ENCODE measurements at regions of chr14 and their contacts with region 1.

Region 1: DNA sequence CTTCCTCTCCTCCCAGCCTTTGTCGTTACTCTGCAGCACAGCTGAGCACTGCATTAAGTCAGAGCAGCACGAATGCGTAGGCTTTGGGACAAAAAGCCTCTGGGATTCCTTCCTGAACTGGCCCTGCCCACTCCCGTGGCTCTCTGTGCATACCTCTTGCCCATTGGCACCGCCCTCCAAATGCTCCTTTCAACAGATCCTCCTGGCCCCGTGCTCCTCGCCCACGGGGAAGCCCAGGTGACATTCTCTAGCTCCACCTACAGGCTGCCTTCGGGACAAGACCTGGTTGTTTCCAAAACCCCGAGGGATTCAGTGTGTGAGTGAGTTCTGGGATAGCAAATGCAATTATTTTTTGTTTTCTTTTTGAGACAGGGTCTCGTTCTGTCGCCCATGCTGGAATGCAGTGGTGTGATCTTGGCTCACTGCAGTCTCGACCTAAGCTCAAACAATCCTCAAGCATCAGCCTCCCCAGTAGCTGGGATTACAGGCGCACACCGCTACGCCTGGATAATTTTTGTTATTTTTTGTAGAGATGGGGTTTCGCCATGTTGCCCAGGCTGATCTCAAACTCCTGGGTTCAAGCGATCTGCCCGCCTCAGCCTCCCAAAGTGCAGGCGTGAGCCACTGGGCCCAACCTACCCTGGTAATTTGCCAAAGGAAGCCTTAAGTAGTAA is 17.9 kb upstream of the TDRD9 start:
- DNase-seq: peak; percentile 80 to 88 (median 81)
- ATAC-seq: peak; percentile 91 to 97 (median 96)
- H3K4me3 ChIP-seq: peak overlapping the region in 8 of 12 donors; percentile 0 to 43 (median 26)
- H3K27ac ChIP-seq: peak overlapping the region in 8 of 12 donors; percentile 14 to 56 (median 34)
- H3K4me1 ChIP-seq: peaks cover 0 to 13% (median 10%) of the 10 kb centered on the region in 12 donors
- H3K27me3 ChIP-seq: no peaks in the 10 kb centered on the region
- CTCF ChIP-seq: peak; percentile 62 to 91 (median 84)
- POLR2A ChIP-seq: no peak

Region 2: DNA sequence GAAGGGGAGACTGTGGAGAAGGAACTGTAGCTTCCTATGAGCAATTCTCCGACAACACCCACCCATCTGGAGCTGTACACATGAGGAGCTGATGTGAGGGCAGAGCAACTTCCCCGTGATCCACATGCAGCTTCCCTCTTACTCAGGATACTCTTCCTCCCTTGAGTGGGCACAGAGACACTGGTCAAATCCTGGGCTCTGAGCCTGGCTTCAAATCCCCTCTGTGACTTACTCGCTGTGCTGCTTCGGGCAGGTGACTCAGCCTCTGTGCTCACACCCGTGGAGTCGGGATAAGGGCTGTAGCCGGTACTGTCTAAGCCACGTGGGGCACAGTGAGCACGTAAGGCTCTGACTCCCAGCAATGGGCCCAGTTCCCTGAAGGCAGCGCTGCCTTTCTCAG is 163.7 kb before region 1 on chr14:
- intact Hi-C with region 1: loop called in 1 of 10 experiments (anchors 10 kb)
- DNase-seq: no peak
- ATAC-seq: peak in 2 of 4 donors; percentile 17 to 29
- H3K4me3 ChIP-seq: no peak overlapping the region
- H3K27ac ChIP-seq: no peak overlapping the region
- H3K4me1 ChIP-seq: peaks cover 0 to 5% (median 0%) of the 10 kb centered on the region in 12 donors
- H3K27me3 ChIP-seq: no peaks in the 10 kb centered on the region
- CTCF ChIP-seq: no peak
- POLR2A ChIP-seq: no peak

Region 3: DNA sequence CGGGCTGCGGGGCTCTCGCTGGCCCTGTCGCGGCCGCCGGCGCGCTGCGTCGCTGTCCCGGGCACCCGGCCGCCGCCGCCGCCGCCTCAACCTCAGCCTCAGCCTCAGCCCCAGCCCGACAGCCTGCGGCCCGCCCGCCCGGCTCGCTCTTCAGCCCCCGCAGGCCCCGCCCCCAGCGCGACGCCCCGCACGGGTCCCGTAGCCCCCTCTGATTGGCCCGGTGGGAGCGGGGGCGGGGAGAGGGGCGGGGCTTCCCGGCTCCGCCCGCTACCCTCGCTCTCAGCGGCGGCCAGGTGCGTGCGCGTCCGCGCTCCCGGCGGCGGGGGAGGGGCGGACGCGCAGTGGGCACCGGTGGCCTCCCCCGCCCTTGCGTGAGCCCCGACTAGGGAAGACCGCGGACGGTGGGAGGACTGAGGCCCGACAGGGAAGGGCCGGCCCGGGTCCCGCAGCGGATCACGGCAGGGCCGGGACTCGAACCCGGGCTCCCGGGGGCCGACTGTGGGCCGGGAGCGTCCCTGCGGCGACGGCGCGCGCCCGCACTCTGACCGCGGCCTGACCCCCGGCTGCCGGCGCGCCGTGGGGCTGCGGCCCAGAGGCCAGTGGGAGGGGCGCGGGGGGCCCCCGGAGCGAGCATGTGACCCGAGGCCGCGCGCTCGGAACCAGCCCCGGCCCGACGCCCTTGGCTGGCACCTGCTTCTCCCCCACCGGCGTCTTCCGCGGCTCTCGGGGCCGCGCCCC is 62.8 kb before region 1 on chr14 and contains the start of gene PPP1R13B:
- intact Hi-C with region 1: loop called in 1 of 10 experiments (anchors 10 kb)
- DNase-seq: peak; percentile 95 to 96 (median 95)
- ATAC-seq: peak; percentile 93 to 96 (median 96)
- H3K4me3 ChIP-seq: peak within 1 kb of the TSS; percentile 50 to 98 (median 82)
- H3K27ac ChIP-seq: peak within 1 kb of the TSS; percentile 79 to 96 (median 90)
- H3K4me1 ChIP-seq: peaks cover 0 to 44% (median 25%) of the 10 kb centered on the region in 12 donors
- H3K27me3 ChIP-seq: peaks cover 0 to 9% (median 0%) of the 10 kb centered on the region in 9 donors
- CTCF ChIP-seq: no peak
- POLR2A ChIP-seq: peak in 1 of 2 donors; percentile 67
- total RNA-seq, gene PPP1R13B: 59.0 to 96.2 (median 78.1) TPM

Region 4: GRCh38 chr14:103989964-103990363 is 79.6 kb after region 1 on chr14:
- intact Hi-C with region 1: loop called in 1 of 10 experiments (anchors 10 kb)
- DNase-seq: no peak
- ATAC-seq: no peak
- H3K4me3 ChIP-seq: no peak overlapping the region
- H3K27ac ChIP-seq: no peak overlapping the region
- H3K4me1 ChIP-seq: no peaks in the 10 kb centered on the region
- H3K27me3 ChIP-seq: peaks cover 0 to 9% (median 0%) of the 10 kb centered on the region in 9 donors
- CTCF ChIP-seq: no peak
- POLR2A ChIP-seq: no peak

Measured in heart left ventricle (tissue), 16 donors.